HCT116 (cell line): ENCODE measurements at regions of chr4 and their contacts with region 1.

Region 1: DNA sequence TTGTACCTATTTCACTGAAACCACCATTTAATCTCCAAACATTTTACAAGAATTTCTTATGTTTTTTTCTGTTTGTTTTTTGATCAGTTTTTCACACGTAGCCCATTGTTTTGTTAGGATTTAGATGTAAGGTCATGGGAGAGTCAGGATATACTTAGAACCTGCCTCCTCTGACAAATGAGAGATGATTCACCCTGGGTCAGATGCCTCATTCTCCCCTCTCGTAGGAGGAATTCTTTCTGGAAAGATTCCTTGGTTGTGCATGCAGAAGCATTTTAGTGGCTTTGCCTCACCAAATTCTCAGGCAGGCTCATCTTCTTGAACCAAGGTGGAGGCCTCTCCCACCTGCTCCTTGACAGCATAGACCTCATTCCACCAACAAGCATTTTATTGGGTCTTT is 599.3 kb downstream of the SPRY1 start:
- DNase-seq: no peak
- ATAC-seq: no peak
- H3K4me3 ChIP-seq: no peak overlapping the region
- H3K27ac ChIP-seq: no peak overlapping the region
- H3K4me1 ChIP-seq: peaks cover 2 to 4% of the 10 kb centered on the region in 2 experiments; a peak in 2 of 4 replicates
- H3K27me3 ChIP-seq: no peaks in the 10 kb centered on the region
- CTCF ChIP-seq: no peak
- POLR2A ChIP-seq: no peak
- RAD21 ChIP-seq: no peak

Region 2: GRCh38 chr4:123699880-123700771 is 295.8 kb before region 1 on chr4:
- CTCF ChIA-PET with region 1: no interaction called
- POLR2A ChIA-PET with region 1: no interaction called
- RAD21 ChIA-PET with region 1: no interaction called
- intact Hi-C with region 1: no loop called
- DNase-seq: no peak
- ATAC-seq: no peak
- H3K4me3 ChIP-seq: no peak overlapping the region
- H3K27ac ChIP-seq: no peak overlapping the region
- H3K4me1 ChIP-seq: no peaks in the 10 kb centered on the region
- H3K27me3 ChIP-seq: no peaks in the 10 kb centered on the region
- CTCF ChIP-seq: no peak
- POLR2A ChIP-seq: no peak
- RAD21 ChIP-seq: no peak

Region 3: GRCh38 chr4:123776254-123776653 is 219.7 kb before region 1 on chr4:
- CTCF ChIA-PET with region 1: no interaction called
- POLR2A ChIA-PET with region 1: no interaction called
- RAD21 ChIA-PET with region 1: no interaction called
- intact Hi-C with region 1: loop called (anchors 10 kb)
- DNase-seq: no peak
- ATAC-seq: no peak
- H3K4me3 ChIP-seq: no peak overlapping the region
- H3K27ac ChIP-seq: no peak overlapping the region
- H3K4me1 ChIP-seq: no peaks in the 10 kb centered on the region
- H3K27me3 ChIP-seq: no peaks in the 10 kb centered on the region
- CTCF ChIP-seq: no peak
- POLR2A ChIP-seq: no peak
- RAD21 ChIP-seq: no peak

Region 4: DNA sequence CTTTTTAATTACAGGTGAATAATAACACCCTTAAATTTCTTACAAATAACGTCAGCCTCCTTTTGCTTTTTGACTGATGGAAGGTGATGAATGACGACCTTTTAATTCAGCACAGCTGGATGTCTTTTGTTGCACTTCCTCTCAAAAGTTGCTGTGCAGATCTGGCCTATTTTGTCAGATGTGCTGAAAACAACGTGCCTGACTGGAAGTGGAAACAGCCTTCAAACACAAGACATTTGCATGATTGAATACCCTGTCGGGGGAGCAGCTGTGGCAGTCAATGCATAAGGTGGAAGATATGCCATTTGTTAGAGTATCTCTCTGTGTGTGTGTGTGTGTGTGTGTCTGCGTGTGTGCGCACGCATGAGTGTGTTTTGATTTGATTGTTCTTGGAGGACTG is 19.7 kb before region 1 on chr4:
- CTCF ChIA-PET with region 1: no interaction called
- POLR2A ChIA-PET with region 1: no interaction called
- RAD21 ChIA-PET with region 1: no interaction called
- intact Hi-C with region 1: no loop called
- DNase-seq: no peak
- ATAC-seq: no peak
- H3K4me3 ChIP-seq: no peak overlapping the region
- H3K27ac ChIP-seq: no peak overlapping the region
- H3K4me1 ChIP-seq: no peaks in the 10 kb centered on the region
- H3K27me3 ChIP-seq: no peaks in the 10 kb centered on the region
- CTCF ChIP-seq: no peak
- POLR2A ChIP-seq: no peak
- RAD21 ChIP-seq: no peak

Region 5: GRCh38 chr4:124478470-124478869 is 482.5 kb after region 1 on chr4:
- CTCF ChIA-PET with region 1: no interaction called
- POLR2A ChIA-PET with region 1: no interaction called
- RAD21 ChIA-PET with region 1: no interaction called
- intact Hi-C with region 1: no loop called
- DNase-seq: no peak
- ATAC-seq: no peak
- H3K4me3 ChIP-seq: no peak overlapping the region
- H3K27ac ChIP-seq: no peak overlapping the region
- H3K4me1 ChIP-seq: no peaks in the 10 kb centered on the region
- H3K27me3 ChIP-seq: no peaks in the 10 kb centered on the region
- CTCF ChIP-seq: no peak
- POLR2A ChIP-seq: no peak
- RAD21 ChIP-seq: no peak